ENCODE measurements at regions of chr1 and their contacts with region 1.

Region 1: DNA sequence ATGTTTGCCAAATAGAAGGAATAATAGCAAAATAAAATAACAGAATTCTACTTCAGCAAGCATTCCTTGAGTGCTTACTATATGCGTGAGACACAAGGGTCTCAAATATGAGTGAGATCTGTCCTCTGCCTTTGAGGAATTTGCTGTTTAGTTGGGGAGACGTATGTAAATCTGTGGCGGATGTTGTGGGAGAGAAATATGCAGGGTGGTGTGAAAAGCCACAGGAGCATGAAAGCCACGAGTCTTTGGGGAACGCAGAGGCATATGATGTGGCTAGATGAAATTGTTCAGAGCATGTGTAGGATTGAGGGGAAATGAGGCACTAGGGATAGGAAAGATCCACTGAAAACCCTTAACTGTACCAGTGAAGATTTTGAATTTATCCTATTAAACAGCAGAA is 244.4 kb downstream of the PBX1 start:
- DNase-seq: no peak
- ATAC-seq: no peak
- H3K4me3 ChIP-seq: no peak overlapping the region
- H3K27ac ChIP-seq: no peak overlapping the region
- H3K4me1 ChIP-seq: peaks cover 0 to 4% of the 10 kb centered on the region in 2 experiments; a peak in 1 of 4 replicates
- H3K27me3 ChIP-seq: no peaks in the 10 kb centered on the region
- CTCF ChIP-seq: no peak
- POLR2A ChIP-seq: no peak
- RAD21 ChIP-seq: no peak

Region 2: GRCh38 chr1:163561580-163562295 is 1241.6 kb before region 1 on chr1:
- CTCF ChIA-PET with region 1: no interaction called
- POLR2A ChIA-PET with region 1: no interaction called
- RAD21 ChIA-PET with region 1: no interaction called
- intact Hi-C with region 1: loop called (anchors 10 kb)
- DNase-seq: peak; percentile 1
- ATAC-seq: peak; percentile 78
- H3K4me3 ChIP-seq: no peak overlapping the region
- H3K27ac ChIP-seq: no peak overlapping the region
- H3K4me1 ChIP-seq: no peaks in the 10 kb centered on the region
- H3K27me3 ChIP-seq: no peaks in the 10 kb centered on the region
- CTCF ChIP-seq: peak; percentile 28 to 56 (median 42); a peak in 4 of 6 replicates
- POLR2A ChIP-seq: no peak
- RAD21 ChIP-seq: peak; percentile 64

Measured in HCT116 (cell line).